ENCODE measurements at regions of chr19 and their contacts with region 1.

Region 1: DNA sequence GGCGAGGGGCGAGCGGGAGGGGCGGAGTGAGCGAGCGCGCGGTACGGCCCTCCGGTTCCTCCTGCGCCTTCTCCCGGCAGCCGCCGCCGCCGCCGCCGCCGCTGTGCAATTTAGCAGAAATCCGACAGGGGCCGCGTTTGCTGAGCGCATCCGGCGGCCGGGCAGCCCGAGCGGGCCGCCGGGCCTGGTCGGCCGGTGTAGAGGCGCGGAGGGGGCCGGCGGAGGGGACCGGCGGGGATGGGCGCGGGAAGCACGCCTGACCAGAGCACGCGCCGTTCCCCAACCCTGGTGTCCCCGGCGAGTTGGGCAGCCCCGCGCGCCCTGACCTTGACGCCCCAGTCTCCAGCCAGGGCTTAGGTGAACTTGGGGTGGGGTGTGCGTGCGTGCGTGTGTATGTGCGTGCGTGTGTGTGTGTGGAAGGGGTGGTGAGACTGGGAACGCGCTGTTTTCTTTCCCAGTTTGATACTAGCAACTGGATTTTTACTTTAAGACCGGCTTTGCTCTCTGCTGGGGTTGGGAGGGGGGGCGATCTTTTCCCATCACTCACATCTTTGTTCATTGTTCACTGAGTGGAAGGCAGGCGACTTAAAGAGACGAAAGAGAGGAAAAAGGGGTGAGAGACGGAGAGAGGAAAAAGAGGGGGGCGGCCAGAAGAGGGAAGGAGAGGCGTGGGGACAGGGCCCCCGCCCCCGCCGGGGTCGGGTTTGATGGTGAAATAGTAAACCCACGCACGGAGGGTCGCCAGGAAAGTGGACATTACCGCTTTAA is 144.3 kb upstream of the ZNF536 start:
- DNase-seq: peak; percentile 65 to 97 (median 76)

Region 2: DNA sequence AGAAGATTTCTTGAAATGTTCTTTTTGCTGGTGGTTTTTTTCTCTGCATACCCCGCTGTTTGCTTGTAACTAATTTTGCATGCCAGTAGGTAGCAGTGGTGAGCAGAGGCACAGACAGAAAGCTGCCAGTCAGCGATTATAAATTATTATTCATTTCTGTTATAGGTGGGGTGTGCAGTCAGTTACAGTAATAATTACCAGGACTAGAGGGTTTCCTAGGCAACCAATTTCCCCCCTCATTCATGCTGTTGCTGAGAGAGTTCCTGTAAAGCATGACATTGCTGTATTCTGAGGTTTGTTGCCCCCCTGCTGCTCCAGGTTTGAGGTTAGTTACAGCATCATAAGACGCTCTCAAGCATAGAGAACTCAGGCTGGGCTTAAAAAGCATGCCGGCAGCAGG is 181.3 kb before region 1 on chr19:
- intact Hi-C with region 1: loop called (anchors 1 kb)
- DNase-seq: peak in 1 of 10 donors; percentile 78

Region 3: DNA sequence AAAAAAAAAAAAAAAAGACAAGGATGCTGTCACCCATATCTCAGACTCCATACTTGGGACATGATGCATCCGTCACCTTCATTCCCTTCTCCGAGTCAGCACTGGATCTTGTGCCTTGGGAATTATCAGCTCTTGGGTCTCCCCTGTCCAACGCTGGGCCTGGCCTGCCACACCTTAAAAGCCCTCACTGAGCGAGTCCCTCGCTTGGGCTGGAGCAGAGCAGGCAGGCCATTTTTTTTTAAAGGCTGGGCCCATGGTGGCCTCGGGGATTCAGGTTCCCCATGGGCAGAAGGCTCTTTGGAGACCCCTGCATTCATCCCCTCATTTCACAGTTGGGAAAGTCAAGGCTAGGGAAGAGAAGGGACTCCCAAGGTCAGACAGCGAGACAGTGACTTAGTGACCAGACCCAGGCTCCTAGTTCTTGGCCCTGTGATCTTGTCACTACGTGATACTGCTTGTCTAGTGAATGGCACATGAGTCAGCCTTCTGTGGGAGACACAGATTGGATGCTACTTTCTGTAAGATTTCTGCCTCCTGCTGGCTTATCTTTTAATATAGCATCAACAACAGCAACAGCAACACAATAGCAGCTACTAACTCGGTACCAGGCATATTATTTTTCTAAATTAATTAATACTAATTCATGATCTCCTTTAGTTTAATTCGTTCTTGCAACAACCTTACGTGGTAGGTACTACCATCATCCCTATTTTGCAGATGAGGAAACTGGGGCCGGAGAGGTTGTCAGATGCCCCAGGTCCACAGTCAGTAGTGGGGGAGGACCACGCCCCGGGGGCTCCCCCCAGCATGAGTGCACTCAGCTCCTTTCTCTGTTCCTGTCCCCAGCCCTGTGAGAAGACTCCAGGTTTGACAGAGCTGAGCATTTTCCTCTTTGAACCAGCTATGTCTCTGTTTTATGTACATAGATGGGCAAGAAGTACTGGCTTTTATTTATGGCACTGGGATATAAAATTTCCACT is 116.9 kb after region 1 on chr19:
- intact Hi-C with region 1: loop called (anchors 1 kb)
- DNase-seq: peak in 2 of 10 donors; percentile 16 to 82

Region 4: DNA sequence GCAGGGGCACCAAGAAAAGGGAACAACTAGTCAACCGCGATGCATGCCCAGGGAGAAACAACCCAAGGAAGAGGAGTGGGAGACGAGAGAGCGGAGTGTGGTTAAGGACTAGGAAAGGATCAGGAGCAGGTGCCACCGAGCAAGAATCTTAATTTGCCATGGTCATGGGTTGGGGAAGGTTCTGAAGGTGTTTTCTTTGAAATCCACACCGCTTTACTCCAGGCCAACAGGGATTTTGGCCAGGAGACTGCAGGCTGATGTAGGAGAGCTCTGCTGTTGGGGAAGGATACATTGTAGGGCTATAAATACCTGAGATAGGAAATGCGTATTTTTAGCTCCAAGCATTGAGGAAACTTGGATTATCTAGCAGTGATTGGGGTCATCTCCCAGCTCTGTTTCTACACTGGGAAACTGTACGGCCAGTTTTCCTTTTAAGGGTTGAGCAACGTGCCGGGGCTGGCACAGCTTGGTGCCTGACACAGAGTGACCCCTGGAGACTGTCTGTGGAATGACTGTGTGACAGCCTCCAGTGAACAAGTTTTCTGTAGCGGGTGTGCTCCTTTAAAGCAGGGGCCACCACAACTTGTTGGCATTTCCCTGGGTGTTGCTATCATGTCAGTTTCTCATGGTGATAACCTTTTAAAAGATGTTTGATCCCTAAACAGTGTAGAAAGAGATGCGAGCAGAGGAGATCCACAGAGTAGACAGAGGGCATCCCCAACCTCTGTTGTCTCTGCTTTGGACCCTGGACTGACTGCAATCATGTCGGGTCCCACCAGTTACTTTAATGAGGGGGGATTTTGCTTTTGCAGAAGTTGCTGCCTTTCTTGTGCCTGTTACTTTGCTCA is 178.6 kb after region 1 on chr19:
- intact Hi-C with region 1: loop called (anchors 5 kb)
- DNase-seq: peak in 8 of 10 donors; percentile 38 to 95 (median 66)